ENCODE measurements at regions of chr14 and their contacts with region 1.

Region 1: GRCh38 chr14:92783816-92784431 is 10.2 kb upstream of the GOLGA5 start:
- DNase-seq: no peak
- ATAC-seq: peak; percentile 39 to 59
- H3K4me3 ChIP-seq: no peak overlapping the region
- H3K27ac ChIP-seq: no peak overlapping the region
- H3K4me1 ChIP-seq: no peaks in the 10 kb centered on the region
- H3K27me3 ChIP-seq: no peaks in the 10 kb centered on the region

Region 2: GRCh38 chr14:92712654-92713051 is 71.3 kb before region 1 on chr14:
- intact Hi-C with region 1: loop called (anchors 2 to 5 kb)
- DNase-seq: no peak
- ATAC-seq: no peak
- H3K4me3 ChIP-seq: no peak overlapping the region
- H3K27ac ChIP-seq: no peak overlapping the region
- H3K4me1 ChIP-seq: no peaks in the 10 kb centered on the region
- H3K27me3 ChIP-seq: no peaks in the 10 kb centered on the region

Region 3: GRCh38 chr14:92719890-92720323 is 64.0 kb before region 1 on chr14:
- intact Hi-C with region 1: loop called in 2 of 4 experiments (anchors 2 to 5 kb)
- DNase-seq: peak in 1 of 3 donors; percentile 70
- ATAC-seq: peak; percentile 24 to 67
- H3K4me3 ChIP-seq: no peak overlapping the region
- H3K27ac ChIP-seq: peak overlapping the region; percentile 66
- H3K4me1 ChIP-seq: peaks cover 9% of the 10 kb centered on the region
- H3K27me3 ChIP-seq: no peaks in the 10 kb centered on the region

Measured in right cardiac atrium (tissue), 5 donors.